HEK293 (cell line): ENCODE measurements at regions of chr17 and their contacts with region 1.

Region 1: GRCh38 chr17:49227436-49228261 is 2.9 kb downstream of the PHOSPHO1 start:
- H3K4me3 ChIP-seq: no peak overlapping the region
- H3K27ac ChIP-seq: no peak overlapping the region
- H3K4me1 ChIP-seq: no peaks in the 10 kb centered on the region; the same call in none of the 2 replicates
- CTCF ChIP-seq: peak; percentile 77

Region 2: GRCh38 chr17:49180303-49180702 is 47.3 kb before region 1 on chr17:
- CTCF ChIA-PET with region 1: interaction called, 17 read pairs
- POLR2A ChIA-PET with region 1: no interaction called
- H3K4me3 ChIP-seq: no peak overlapping the region
- H3K27ac ChIP-seq: no peak overlapping the region
- H3K4me1 ChIP-seq: no peaks in the 10 kb centered on the region
- CTCF ChIP-seq: no peak

Region 3: DNA sequence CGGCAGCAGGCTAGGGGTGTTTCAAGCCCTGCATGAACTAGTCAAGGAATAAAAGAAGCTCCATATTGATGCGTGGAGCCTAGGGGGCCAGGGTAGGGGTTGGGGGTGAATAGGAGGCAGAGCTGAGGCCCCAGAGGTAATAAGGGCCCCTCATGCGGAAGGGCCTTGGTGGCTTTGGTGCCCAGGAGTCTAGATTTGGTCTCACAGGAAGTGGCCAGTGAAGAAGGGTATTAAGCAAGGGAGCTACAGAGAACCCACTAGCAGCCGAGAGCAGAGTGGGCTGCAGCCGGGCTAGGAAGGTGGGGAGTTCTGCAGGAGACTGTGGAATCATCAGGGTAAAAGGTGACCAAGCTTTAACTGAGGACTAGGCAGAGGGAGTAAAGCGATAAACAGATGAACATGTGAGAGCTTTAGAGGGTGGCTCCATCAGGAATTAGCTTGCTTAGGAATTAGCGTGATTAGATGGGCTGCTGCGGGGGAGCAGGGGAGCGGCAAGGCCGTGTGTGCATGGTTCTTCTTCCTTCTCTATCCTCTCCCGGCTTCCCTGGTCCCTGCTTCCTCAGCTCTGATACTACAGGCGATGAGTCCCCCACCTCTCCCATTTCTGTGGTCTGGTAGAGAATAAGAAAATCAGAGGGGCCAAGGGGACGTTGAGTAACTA is 27.1 kb before region 1 on chr17:
- CTCF ChIA-PET with region 1: interaction called, 15 read pairs
- POLR2A ChIA-PET with region 1: no interaction called
- H3K4me3 ChIP-seq: no peak overlapping the region
- H3K27ac ChIP-seq: no peak overlapping the region
- H3K4me1 ChIP-seq: no peaks in the 10 kb centered on the region
- CTCF ChIP-seq: no peak

Region 4: GRCh38 chr17:49216953-49217650 is 10.5 kb before region 1 on chr17:
- CTCF ChIA-PET with region 1: interaction called, 63 read pairs
- POLR2A ChIA-PET with region 1: no interaction called
- H3K4me3 ChIP-seq: no peak overlapping the region
- H3K27ac ChIP-seq: no peak overlapping the region
- H3K4me1 ChIP-seq: no peaks in the 10 kb centered on the region
- CTCF ChIP-seq: no peak

Region 5: DNA sequence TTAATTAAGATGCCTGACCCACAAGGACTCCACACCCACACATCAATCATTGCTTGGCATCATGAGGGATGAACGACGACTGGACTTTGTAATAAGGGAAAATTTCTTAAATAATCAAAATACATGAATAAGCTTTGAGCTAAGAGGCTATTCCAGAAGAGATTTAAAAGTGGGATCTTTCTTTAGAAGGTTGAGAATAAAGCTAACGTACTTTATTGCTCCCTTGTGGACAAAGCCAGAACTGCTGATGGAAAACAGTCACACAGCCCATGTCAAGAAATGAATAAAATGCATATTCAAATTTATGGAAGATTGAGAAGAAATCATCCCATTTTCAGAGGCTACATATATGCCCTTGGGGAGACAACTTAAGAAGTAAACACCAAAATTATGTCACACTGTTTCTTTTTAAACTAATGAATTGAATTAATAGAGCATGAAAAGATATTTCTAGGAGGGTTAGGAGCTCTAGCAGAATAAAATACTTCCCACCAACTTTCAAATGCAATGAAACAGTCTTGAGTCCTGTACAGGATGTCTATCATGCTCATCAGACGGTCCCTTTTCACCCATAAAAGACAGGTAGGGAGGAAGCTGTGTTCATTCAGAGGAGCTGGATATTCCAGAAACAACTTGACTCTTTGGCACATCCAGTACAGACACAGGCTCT is 63.2 kb after region 1 on chr17:
- CTCF ChIA-PET with region 1: interaction called, 30 read pairs
- POLR2A ChIA-PET with region 1: no interaction called
- H3K4me3 ChIP-seq: no peak overlapping the region
- H3K27ac ChIP-seq: no peak overlapping the region
- H3K4me1 ChIP-seq: peaks cover 2% of the 10 kb centered on the region; the same call in 1 of the 2 replicates
- CTCF ChIP-seq: 0 out of 2 replicates have a peak, but pooled peaks have one; percentile 24